B cell (primary cell): ENCODE measurements at regions of chr6 and their contacts with region 1.

Region 1: GRCh38 chr6:159726918-159727716 is at the start of gene WTAP:
- DNase-seq: peak; percentile 99
- ATAC-seq: peak; percentile 84
- H3K4me3 ChIP-seq: peak within 1 kb of the TSS; percentile 79 to 91 (median 86)
- H3K4me3 Mint-ChIP-seq: peak within 1 kb of the TSS; percentile 95
- H3K27ac ChIP-seq: peak within 1 kb of the TSS; percentile 97 to 98
- H3K27ac Mint-ChIP-seq: peak within 1 kb of the TSS; percentile 99
- H3K4me1 ChIP-seq: peaks cover 42 to 46% of the 10 kb centered on the region in 2 donors
- H3K4me1 Mint-ChIP-seq: peaks cover 44% of the 10 kb centered on the region
- H3K27me3 ChIP-seq: no peaks in the 10 kb centered on the region
- H3K27me3 Mint-ChIP-seq: no peaks in the 10 kb centered on the region
- CTCF ChIP-seq: no peak
- total RNA-seq, gene WTAP: 165 TPM in 2 replicates

Region 2: GRCh38 chr6:159739341-159739740 is 12.2 kb after region 1 on chr6:
- CTCF ChIA-PET with region 1: interaction called, 10 read pairs
- POLR2A ChIA-PET with region 1: no interaction called
- intact Hi-C with region 1: loop called (anchors 1 kb)
- DNase-seq: no peak
- ATAC-seq: no peak
- H3K4me3 ChIP-seq: no peak overlapping the region
- H3K4me3 Mint-ChIP-seq: no peak overlapping the region
- H3K27ac ChIP-seq: peak overlapping the region in 1 of 2 donors; percentile 28
- H3K27ac Mint-ChIP-seq: no peak overlapping the region
- H3K4me1 ChIP-seq: peaks cover under 1 to 4% of the 10 kb centered on the region in 2 donors
- H3K4me1 Mint-ChIP-seq: peaks cover 18% of the 10 kb centered on the region
- H3K27me3 ChIP-seq: no peaks in the 10 kb centered on the region
- H3K27me3 Mint-ChIP-seq: no peaks in the 10 kb centered on the region
- CTCF ChIP-seq: no peak

Region 3: GRCh38 chr6:159761873-159762680 is 35.0 kb after region 1 on chr6 and contains the start of gene ACAT2:
- CTCF ChIA-PET with region 1: interaction called, 5 read pairs
- POLR2A ChIA-PET with region 1: interaction called, 14 read pairs
- intact Hi-C with region 1: loop called (anchors 1 kb)
- DNase-seq: peak; percentile 94
- ATAC-seq: peak; percentile 96
- H3K4me3 ChIP-seq: peak within 1 kb of the TSS; percentile 83 to 99 (median 93)
- H3K4me3 Mint-ChIP-seq: peak within 1 kb of the TSS; percentile 95
- H3K27ac ChIP-seq: peak within 1 kb of the TSS; percentile 95 to 96
- H3K27ac Mint-ChIP-seq: peak within 1 kb of the TSS; percentile 96
- H3K4me1 ChIP-seq: peaks cover 17 to 19% of the 10 kb centered on the region in 2 donors
- H3K4me1 Mint-ChIP-seq: peaks cover 21% of the 10 kb centered on the region
- H3K27me3 ChIP-seq: no peaks in the 10 kb centered on the region
- H3K27me3 Mint-ChIP-seq: no peaks in the 10 kb centered on the region
- CTCF ChIP-seq: no peak
- total RNA-seq, gene ACAT2: 31.1 and 32.6 TPM in 2 replicates

Region 4: GRCh38 chr6:159789377-159790148 is 62.4 kb after region 1 on chr6 and contains the start of gene TCP1:
- CTCF ChIA-PET with region 1: interaction called, 6 read pairs
- POLR2A ChIA-PET with region 1: interaction called, 28 read pairs
- intact Hi-C with region 1: loop called (anchors 1 kb)
- DNase-seq: peak; percentile 99
- ATAC-seq: peak; percentile 78
- H3K4me3 ChIP-seq: peak within 1 kb of the TSS; percentile 70 to 98 (median 93)
- H3K4me3 Mint-ChIP-seq: peak within 1 kb of the TSS; percentile 100
- H3K27ac ChIP-seq: peak within 1 kb of the TSS; percentile 70 to 96
- H3K27ac Mint-ChIP-seq: peak within 1 kb of the TSS; percentile 95
- H3K4me1 ChIP-seq: peaks cover 30 to 32% of the 10 kb centered on the region in 2 donors
- H3K4me1 Mint-ChIP-seq: peaks cover 51% of the 10 kb centered on the region
- H3K27me3 ChIP-seq: no peaks in the 10 kb centered on the region
- H3K27me3 Mint-ChIP-seq: no peaks in the 10 kb centered on the region
- CTCF ChIP-seq: no peak
- total RNA-seq, gene TCP1: 137 and 150 TPM in 2 replicates

Region 5: DNA sequence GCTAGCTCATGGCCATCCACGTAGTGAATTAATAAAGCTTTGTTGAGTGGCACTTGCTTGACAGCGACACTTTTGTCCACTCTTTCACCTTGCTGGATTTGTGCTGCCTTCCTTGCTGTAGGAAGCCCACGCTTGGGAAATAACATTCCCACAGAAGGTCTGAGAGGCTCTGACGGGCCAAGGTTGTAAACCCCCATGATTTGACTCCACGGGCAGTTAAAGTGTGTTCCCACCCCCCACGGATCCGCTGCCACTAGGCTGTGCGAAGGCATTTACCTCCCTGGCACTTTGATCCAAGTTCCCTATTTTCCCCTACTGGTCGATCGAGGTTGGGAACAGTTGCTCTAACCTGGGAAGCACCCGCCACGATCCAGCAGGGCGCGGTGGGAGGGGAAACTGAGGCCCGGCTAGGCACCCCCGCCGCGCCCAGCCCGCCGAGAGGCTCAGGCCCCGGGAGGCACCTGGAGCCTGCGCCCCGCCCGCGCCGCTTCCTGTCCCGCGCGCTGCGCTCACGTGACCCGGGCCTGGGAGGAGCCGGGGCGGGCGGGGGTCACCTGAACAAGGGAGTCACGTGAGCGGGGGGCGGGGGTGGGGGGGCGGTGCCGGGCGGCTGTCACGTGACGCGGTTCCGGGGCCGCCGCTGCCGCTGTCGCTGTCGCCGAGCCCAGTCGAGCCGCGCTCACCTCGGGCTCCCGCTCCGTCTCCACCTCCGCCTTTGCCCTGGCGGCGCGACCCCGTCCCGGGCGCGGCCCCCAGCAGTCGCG is 241.5 kb after region 1 on chr6 and contains the start of gene IGF2R:
- CTCF ChIA-PET with region 1: interaction called, 4 read pairs
- POLR2A ChIA-PET with region 1: interaction called, 6 read pairs
- intact Hi-C with region 1: loop called (anchors 2 kb)
- DNase-seq: peak; percentile 94
- ATAC-seq: peak; percentile 87
- H3K4me3 ChIP-seq: peak within 1 kb of the TSS; percentile 54 to 85 (median 63)
- H3K4me3 Mint-ChIP-seq: peak within 1 kb of the TSS; percentile 92
- H3K27ac ChIP-seq: peak within 1 kb of the TSS; percentile 73 to 75
- H3K27ac Mint-ChIP-seq: peak within 1 kb of the TSS; percentile 92
- H3K4me1 ChIP-seq: peaks cover 12 to 25% of the 10 kb centered on the region in 2 donors
- H3K4me1 Mint-ChIP-seq: peaks cover 36% of the 10 kb centered on the region
- H3K27me3 ChIP-seq: no peaks in the 10 kb centered on the region
- H3K27me3 Mint-ChIP-seq: no peaks in the 10 kb centered on the region
- CTCF ChIP-seq: no peak
- total RNA-seq, gene IGF2R: 53.3 and 58.0 TPM in 2 replicates

Region 6: GRCh38 chr6:160766657-160766988 is 1039.5 kb after region 1 on chr6:
- CTCF ChIA-PET with region 1: no interaction called
- POLR2A ChIA-PET with region 1: no interaction called
- intact Hi-C with region 1: no loop called
- DNase-seq: no peak
- ATAC-seq: no peak
- H3K4me3 ChIP-seq: no peak overlapping the region
- H3K4me3 Mint-ChIP-seq: peak overlapping the region; percentile 57
- H3K27ac ChIP-seq: no peak overlapping the region
- H3K27ac Mint-ChIP-seq: no peak overlapping the region
- H3K4me1 ChIP-seq: peaks cover 0 to 6% of the 10 kb centered on the region in 2 donors
- H3K4me1 Mint-ChIP-seq: peaks cover 11% of the 10 kb centered on the region
- H3K27me3 ChIP-seq: peaks cover 0 to 19% (median 6%) of the 10 kb centered on the region in 4 experiments
- H3K27me3 Mint-ChIP-seq: peaks cover 34% of the 10 kb centered on the region
- CTCF ChIP-seq: no peak